ENCODE measurements at regions of chrX and their contacts with region 1.

Region 1: GRCh38 chrX:24619647-24620046 is 27.5 kb downstream of the PCYT1B start:
- DNase-seq: peak in 5 of 10 donors; percentile 3 to 43 (median 33)
- H3K4me3 ChIP-seq: peak overlapping the region in 1 of 59 donors; percentile 5
- H3K27ac ChIP-seq: peak overlapping the region in 35 of 59 donors; percentile 6 to 72 (median 46)
- H3K27me3 ChIP-seq: peaks cover 0 to 63% (median 10%) of the 10 kb centered on the region in 45 donors
- CTCF ChIP-seq: no peak

Region 2: DNA sequence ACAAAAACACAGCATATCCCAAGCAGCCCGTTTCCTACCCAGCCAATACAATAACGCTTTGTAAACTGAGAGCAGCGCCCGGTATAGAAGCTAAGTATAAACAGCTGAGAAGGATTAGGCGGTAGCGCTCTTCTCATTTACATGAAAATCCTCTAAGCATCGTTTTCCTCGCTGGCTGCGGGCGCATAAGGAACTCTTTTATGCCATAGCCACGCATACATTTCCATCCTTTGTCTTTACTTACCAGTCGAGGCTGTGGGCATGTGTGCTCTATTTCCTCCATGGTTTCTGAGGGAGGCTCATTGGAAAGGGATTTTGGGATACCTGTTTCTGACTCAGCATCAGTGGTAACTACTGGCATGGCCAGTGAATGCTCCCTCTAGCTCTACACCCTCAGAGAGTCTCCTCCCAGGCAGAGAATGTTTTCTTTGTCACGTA is 27.1 kb after region 1 on chrX:
- intact Hi-C with region 1: loop called in 1 of 2 experiments (anchors 2 kb)
- DNase-seq: peak in 2 of 10 donors; percentile 5 to 37
- H3K4me3 ChIP-seq: peak overlapping the region; percentile 31 to 70 (median 53)
- H3K27ac ChIP-seq: peak overlapping the region in 49 of 59 donors; percentile 5 to 81 (median 59)
- H3K27me3 ChIP-seq: peaks cover 0 to 74% (median 14%) of the 10 kb centered on the region in 45 donors
- CTCF ChIP-seq: no peak

Region 3: DNA sequence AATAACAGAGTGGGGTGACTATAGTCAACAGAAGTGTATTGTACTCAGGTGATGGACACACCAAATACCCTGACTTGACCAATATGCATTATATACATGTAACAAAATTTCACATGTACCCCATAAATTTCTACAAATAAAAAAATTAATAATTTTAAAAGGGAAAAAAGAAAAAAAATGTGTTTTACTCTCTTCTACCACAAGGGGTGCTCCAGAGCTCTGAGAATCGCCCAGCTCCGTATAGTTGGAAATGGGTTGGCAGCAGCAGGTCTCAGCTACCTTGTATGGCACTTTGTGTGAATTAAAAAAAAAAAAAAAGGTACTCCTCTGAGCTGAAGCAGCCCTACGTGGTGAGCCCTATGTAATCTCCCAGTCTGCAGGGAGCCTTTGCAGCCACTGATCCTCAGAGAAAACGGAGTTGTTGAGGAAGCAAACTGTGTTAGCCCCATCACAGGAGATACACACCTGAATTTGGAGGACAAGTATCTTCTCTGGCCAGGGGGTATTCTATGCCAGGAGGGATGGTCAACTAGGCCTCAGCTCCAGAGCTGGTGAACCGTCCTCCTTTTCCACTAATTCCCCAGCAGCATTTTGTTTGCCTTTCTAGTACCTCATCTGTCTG is 56.9 kb after region 1 on chrX:
- intact Hi-C with region 1: no loop called
- DNase-seq: no peak
- H3K4me3 ChIP-seq: no peak overlapping the region
- H3K27ac ChIP-seq: no peak overlapping the region
- H3K27me3 ChIP-seq: peaks cover 0 to 57% (median 6%) of the 10 kb centered on the region in 45 donors
- CTCF ChIP-seq: peak in 55 of 56 donors; percentile 29 to 69 (median 53)